SK-N-SH (cell line): ENCODE measurements at regions of chr16 and their contacts with region 1.

Region 1: GRCh38 chr16:74998481-74999218 is at the start of gene ZNRF1:
- DNase-seq: peak; percentile 98
- H3K4me3 ChIP-seq: peak within 1 kb of the TSS; percentile 72 to 76
- H3K27ac ChIP-seq: peak within 1 kb of the TSS; percentile 31 to 80; a peak in 3 of 4 replicates
- H3K4me1 ChIP-seq: peaks cover 0 to 26% of the 10 kb centered on the region in 2 experiments; a peak in 3 of 4 replicates
- H3K27me3 ChIP-seq: no peaks in the 10 kb centered on the region
- CTCF ChIP-seq: peak; percentile 79
- EP300 ChIP-seq: 0 out of 4 replicates have a peak, but pooled peaks of 1 of the 2 experiments have one; percentile 22
- RAD21 ChIP-seq: peak; percentile 77
- polyA plus RNA-seq, gene ZNRF1: 20.6 and 23.7 TPM in 2 replicates

Region 2: DNA sequence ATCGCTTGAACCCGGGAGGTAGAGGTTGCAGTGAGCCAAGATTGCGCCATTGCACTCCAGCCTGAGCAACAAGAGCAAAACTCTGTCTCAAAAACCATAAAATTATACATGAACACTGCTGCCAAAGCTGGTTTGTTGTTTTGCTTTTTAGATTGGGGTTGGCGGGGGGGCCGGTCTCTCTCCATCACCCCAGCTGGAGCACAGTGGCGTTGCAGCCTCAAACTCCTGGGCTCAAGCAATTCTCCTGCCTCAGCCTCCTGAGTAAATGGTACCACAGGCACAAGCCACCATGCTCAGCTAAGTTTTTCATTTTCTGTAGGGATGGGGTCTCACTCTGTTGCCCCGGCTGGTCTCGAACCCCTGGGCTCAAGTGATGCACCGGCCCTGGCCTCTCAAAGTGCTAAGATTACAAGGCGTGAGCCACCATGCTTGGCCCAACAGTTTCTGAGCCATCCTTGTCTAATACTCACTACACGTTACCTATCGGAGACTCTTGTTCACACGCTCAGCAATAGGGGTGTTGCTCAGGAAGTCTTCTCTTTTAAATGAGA is 25.4 kb before region 1 on chr16:
- CTCF ChIA-PET with region 1: no interaction called
- POLR2A ChIA-PET with region 1: no interaction called
- DNase-seq: no peak
- H3K4me3 ChIP-seq: no peak overlapping the region
- H3K27ac ChIP-seq: no peak overlapping the region
- H3K4me1 ChIP-seq: no peaks in the 10 kb centered on the region
- H3K27me3 ChIP-seq: no peaks in the 10 kb centered on the region
- CTCF ChIP-seq: no peak
- EP300 ChIP-seq: no peak
- RAD21 ChIP-seq: no peak

Region 3: DNA sequence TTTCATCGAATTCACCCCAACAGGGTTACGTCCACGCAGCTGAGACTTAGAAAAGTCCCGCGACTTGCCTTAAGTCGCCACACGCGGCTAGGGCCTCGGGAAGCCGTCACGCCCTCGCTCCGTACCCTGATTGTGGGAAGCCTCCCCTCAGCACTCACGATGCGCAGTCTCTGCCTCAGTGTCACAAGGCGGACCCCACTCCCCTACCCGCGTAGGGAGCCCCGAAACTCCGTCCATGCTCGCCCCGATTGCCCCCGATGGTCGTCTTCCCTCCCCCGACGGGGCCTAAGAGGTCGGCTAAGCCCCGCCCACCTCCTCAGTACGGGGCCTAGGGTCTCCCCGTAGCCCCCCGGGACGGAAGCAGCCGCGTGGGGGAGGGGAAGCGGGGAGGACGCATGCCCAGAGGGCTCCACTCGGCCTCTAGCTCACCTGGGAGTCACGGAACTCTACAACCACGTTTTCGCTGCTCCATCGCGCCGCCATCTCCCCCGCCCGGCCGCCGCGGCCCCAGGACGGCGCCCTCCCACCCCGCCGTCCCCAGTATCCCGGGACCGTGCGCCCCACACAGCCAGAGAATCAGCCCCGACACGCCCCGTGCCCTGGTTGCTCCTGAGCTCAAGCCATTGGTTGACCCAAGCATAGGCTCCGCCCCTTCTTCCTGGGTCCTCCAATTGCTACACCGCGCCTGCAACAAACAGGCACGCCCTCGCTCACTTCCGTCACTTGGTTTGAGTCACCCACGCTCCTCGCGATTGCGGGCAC is 13.9 kb before region 1 on chr16 and contains the start of gene WDR59:
- CTCF ChIA-PET with region 1: interaction called, 32 read pairs
- POLR2A ChIA-PET with region 1: interaction called, 3 read pairs
- DNase-seq: peak; percentile 97
- H3K4me3 ChIP-seq: peak within 1 kb of the TSS; percentile 76 to 95
- H3K27ac ChIP-seq: peak within 1 kb of the TSS; percentile 38 to 71; a peak in 2 of 4 replicates
- H3K4me1 ChIP-seq: peaks cover 0 to 9% of the 10 kb centered on the region in 2 experiments; a peak in 1 of 4 replicates
- H3K27me3 ChIP-seq: no peaks in the 10 kb centered on the region
- CTCF ChIP-seq: no peak
- EP300 ChIP-seq: no peak
- RAD21 ChIP-seq: no peak
- polyA plus RNA-seq, gene WDR59: 48.2 and 60.2 TPM in 2 replicates

Region 4: GRCh38 chr16:75064403-75065148 is 65.9 kb after region 1 on chr16:
- CTCF ChIA-PET with region 1: interaction called, 10 read pairs
- POLR2A ChIA-PET with region 1: no interaction called
- DNase-seq: no peak
- H3K4me3 ChIP-seq: no peak overlapping the region
- H3K27ac ChIP-seq: no peak overlapping the region
- H3K4me1 ChIP-seq: peaks cover under 1 to 19% of the 10 kb centered on the region in 2 experiments; a peak in 1 of 4 replicates
- H3K27me3 ChIP-seq: no peaks in the 10 kb centered on the region
- CTCF ChIP-seq: no peak
- EP300 ChIP-seq: no peak
- RAD21 ChIP-seq: no peak

Region 5: GRCh38 chr16:75105306-75106061 is 106.8 kb after region 1 on chr16:
- CTCF ChIA-PET with region 1: interaction called, 182 read pairs
- POLR2A ChIA-PET with region 1: interaction called, 12 read pairs
- DNase-seq: peak; percentile 84
- H3K4me3 ChIP-seq: no peak overlapping the region; a peak in 1 of 4 replicates
- H3K27ac ChIP-seq: peak overlapping the region; percentile 8 to 97; a peak in 3 of 4 replicates
- H3K4me1 ChIP-seq: peaks cover 38 to 54% of the 10 kb centered on the region in 2 experiments; a peak in 3 of 4 replicates
- H3K27me3 ChIP-seq: no peaks in the 10 kb centered on the region
- CTCF ChIP-seq: no peak
- EP300 ChIP-seq: peak in 1 of 2 experiments; percentile 95; a peak in 2 of 4 replicates
- RAD21 ChIP-seq: peak; percentile 17

Region 6: GRCh38 chr16:75116081-75116910 is 117.6 kb after region 1 on chr16 and contains the start of gene LDHD:
- CTCF ChIA-PET with region 1: interaction called, 182 read pairs
- POLR2A ChIA-PET with region 1: interaction called, 12 read pairs
- DNase-seq: peak; percentile 71
- H3K4me3 ChIP-seq: peak within 1 kb of the TSS in 1 of 2 experiments; percentile 37; a peak in 3 of 4 replicates
- H3K27ac ChIP-seq: no peak within 1 kb of the TSS
- H3K4me1 ChIP-seq: peaks cover 0 to 10% of the 10 kb centered on the region in 2 experiments; a peak in 1 of 4 replicates
- H3K27me3 ChIP-seq: no peaks in the 10 kb centered on the region
- CTCF ChIP-seq: no peak
- EP300 ChIP-seq: no peak
- RAD21 ChIP-seq: no peak
- polyA plus RNA-seq, gene LDHD: 0.53 and 0.70 TPM in 2 replicates

Region 7: GRCh38 chr16:75130150-75130771 is 131.6 kb after region 1 on chr16:
- CTCF ChIA-PET with region 1: interaction called, 10 read pairs
- POLR2A ChIA-PET with region 1: no interaction called
- DNase-seq: no peak
- H3K4me3 ChIP-seq: no peak overlapping the region
- H3K27ac ChIP-seq: no peak overlapping the region
- H3K4me1 ChIP-seq: no peaks in the 10 kb centered on the region
- H3K27me3 ChIP-seq: no peaks in the 10 kb centered on the region; the same call in 1 of the 2 replicates
- CTCF ChIP-seq: no peak
- EP300 ChIP-seq: no peak
- RAD21 ChIP-seq: peak; percentile 48